ENCODE measurements at regions of chr9 and their contacts with region 1.

Region 1: DNA sequence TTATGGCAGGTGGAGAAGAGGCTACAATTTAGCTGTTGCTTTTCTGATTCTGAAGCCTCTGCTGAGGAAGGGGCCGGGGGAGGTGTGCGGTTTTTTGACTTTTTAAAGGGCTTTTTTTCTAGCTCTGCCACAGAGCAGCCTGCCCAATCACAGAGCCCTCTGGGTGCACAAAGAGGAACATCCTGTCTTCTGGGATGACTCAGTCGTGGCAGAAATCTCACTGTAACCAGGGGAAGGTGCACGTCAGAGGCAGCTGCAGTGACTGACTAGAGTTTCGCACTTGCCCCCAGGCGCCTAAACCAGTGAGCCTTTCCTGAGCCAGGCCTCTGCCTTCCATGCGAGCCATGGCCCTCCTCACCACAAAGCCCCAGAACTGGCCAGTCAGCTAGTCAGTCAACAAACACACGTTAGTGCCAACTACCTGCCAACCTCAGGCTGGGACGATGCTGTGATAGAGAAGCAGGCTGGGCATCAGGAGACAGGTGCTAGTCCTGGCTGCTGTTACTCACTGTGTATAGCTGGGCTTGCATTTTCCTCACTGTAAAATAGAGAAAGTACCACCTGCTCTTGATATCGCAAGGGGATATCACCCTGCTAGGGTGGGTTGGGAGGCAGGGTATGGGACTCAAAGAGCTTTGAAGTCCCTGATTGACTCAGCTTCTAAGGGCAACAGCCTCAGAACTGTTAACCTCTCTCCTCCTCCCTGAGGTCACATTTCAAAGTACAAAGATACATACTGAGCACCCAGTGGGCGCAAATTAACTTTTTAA is 2.2 kb downstream of the AKNA start:
- DNase-seq: peak; percentile 69
- H3K4me3 ChIP-seq: no peak overlapping the region
- H3K27me3 ChIP-seq: no peaks in the 10 kb centered on the region
- CTCF ChIP-seq: no peak

Region 2: GRCh38 chr9:114395768-114396167 is 10.2 kb after region 1 on chr9:
- CTCF ChIA-PET with region 1: interaction called, 5 read pairs
- POLR2A ChIA-PET with region 1: interaction called, 16 read pairs
- DNase-seq: no peak
- H3K4me3 ChIP-seq: no peak overlapping the region
- H3K27me3 ChIP-seq: no peaks in the 10 kb centered on the region; the same call in 1 of the 2 replicates
- CTCF ChIP-seq: no peak

Region 3: DNA sequence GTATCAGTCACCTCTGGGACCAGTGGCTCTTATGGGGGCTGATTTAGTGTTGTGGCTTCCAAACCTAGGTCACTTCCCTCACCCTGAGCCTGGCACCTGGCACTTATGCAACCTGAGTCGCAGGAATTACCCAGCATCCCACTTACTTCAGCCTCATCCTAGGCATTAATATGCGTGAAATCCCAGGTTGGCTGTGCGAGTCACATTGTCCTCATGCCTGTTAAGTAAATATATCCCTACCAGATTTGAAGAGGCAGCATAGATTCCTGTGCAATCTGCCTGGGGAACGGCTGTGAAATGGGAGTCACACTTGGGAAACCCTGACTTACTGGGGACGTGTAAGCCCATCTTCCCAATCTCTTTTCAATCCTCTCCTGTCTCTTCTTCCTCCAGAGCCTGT is 44.9 kb after region 1 on chr9:
- CTCF ChIA-PET with region 1: no interaction called
- POLR2A ChIA-PET with region 1: no interaction called
- DNase-seq: no peak
- H3K4me3 ChIP-seq: no peak overlapping the region
- H3K27me3 ChIP-seq: peaks cover 3% of the 10 kb centered on the region
- CTCF ChIP-seq: no peak

Measured in BJ (cell line).